ENCODE measurements at regions of chr6 and their contacts with region 1.

Region 1: DNA sequence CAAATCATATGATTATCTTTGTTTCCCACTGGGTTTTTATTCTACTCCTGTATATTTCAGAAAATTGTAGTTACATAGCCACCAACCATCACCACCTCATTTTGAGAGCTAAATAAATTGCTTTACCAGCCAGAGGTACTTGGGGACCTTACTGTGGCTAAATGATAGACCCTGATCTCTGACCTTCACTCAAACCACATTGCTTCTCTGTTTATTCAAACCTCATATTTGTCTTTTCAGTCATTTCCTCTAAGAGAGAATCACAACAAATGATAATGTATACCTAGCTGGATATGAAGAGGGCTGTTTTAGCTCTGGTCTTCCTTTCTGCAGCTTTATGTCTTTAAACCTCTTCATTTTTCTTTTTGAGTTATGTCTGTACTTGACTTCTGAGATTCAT is 142.8 kb downstream of the ADGB start:
- DNase-seq: no peak
- H3K4me3 Mint-ChIP-seq: no peak overlapping the region
- H3K27ac Mint-ChIP-seq: no peak overlapping the region
- H3K4me1 Mint-ChIP-seq: no peaks in the 10 kb centered on the region
- H3K27me3 Mint-ChIP-seq: peaks cover 25% of the 10 kb centered on the region
- CTCF ChIP-seq: no peak

Region 2: GRCh38 chr6:146785001-146785585 is 43.5 kb after region 1 on chr6:
- CTCF ChIA-PET with region 1: no interaction called
- POLR2A ChIA-PET with region 1: no interaction called
- intact Hi-C with region 1: loop called (anchors 2 kb)
- DNase-seq: peak; percentile 75
- H3K4me3 Mint-ChIP-seq: no peak overlapping the region
- H3K27ac Mint-ChIP-seq: no peak overlapping the region
- H3K4me1 Mint-ChIP-seq: no peaks in the 10 kb centered on the region
- H3K27me3 Mint-ChIP-seq: no peaks in the 10 kb centered on the region
- CTCF ChIP-seq: peak; percentile 54